ENCODE measurements at regions of chr7 and their contacts with region 1.

Region 1: DNA sequence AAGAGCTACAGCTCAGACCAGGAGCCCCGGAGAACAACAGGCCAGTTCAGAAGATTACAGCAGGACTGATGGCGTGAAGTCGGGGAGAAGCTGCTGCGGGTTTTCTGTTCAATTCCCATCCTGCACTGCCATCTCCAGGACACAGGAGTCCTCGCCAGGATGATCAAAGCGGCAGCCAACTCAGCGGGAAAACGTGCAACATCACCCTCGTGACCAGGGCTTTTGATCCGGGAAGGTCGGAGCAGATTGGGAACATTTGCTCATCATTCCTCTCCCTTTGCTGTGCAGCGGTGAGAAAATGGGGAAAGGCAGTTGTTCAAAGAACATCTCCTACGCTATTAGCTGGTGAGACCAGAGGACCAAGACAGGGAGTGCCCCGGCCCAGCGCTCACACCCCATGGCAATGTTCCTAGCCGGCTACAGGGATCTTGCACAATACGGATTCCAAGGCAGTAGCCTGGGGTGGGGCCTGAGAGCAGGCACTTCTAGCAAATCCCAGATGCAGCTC is 50.4 kb upstream of the FOXK1 start:
- DNase-seq: peak; percentile 85
- ATAC-seq: peak; percentile 80
- H3K4me3 ChIP-seq: peak overlapping the region; percentile 30 to 35
- H3K27ac ChIP-seq: peak overlapping the region; percentile 45
- H3K4me1 ChIP-seq: peaks cover 28 to 41% of the 10 kb centered on the region in 2 experiments
- H3K27me3 ChIP-seq: no peaks in the 10 kb centered on the region
- CTCF ChIP-seq: peak; percentile 70 to 79 (median 73); a peak in 5 of 6 replicates
- POLR2A ChIP-seq: no peak
- RAD21 ChIP-seq: peak; percentile 88

Region 2: GRCh38 chr7:3300651-3301378 is 1330.9 kb before region 1 on chr7 and contains the start of gene SDK1:
- CTCF ChIA-PET with region 1: no interaction called
- POLR2A ChIA-PET with region 1: no interaction called
- RAD21 ChIA-PET with region 1: no interaction called
- intact Hi-C with region 1: loop called (anchors 10 kb)
- DNase-seq: peak; percentile 71
- ATAC-seq: peak; percentile 95
- H3K4me3 ChIP-seq: no peak within 1 kb of the TSS
- H3K27ac ChIP-seq: no peak within 1 kb of the TSS
- H3K4me1 ChIP-seq: peaks cover 0 to 2% of the 10 kb centered on the region in 2 experiments; a peak in 1 of 4 replicates
- H3K27me3 ChIP-seq: peaks cover 37% of the 10 kb centered on the region
- CTCF ChIP-seq: peak; percentile 44 to 74 (median 60); a peak in 5 of 6 replicates
- POLR2A ChIP-seq: no peak
- RAD21 ChIP-seq: peak; percentile 72
- total RNA-seq, gene SDK1: 0.05 TPM

Region 3: DNA sequence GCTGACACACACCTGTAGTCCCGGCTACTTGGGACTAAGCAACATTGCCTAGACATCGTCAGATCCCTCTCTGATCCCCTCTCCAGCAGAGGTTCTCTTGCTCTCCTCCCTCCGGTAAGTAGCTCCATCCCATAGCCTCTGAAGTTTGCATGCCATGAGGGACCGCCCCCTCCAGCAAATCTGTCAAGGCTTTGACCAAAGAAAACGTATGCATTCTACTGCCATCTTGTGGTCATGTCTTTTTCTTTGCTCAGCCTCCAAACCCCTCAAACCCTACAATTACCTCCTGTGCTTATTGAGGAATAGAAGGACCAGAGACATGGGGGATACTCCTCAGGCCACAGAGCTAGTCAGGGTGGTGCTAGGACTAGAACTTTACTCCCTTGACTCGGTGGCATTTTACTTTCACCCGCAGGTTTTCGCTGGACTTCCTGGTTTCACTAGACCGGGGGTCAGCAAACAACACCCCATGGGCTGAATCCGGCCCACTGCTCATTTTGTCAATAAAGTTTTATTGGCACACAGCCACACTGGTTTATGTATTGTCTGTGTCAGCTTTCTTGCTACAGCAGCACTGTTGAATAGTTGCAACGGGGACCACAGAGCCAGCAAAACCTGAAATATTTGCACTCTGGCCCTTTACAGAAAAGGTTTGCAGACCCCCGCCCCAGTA is 152.2 kb before region 1 on chr7:
- CTCF ChIA-PET with region 1: no interaction called
- POLR2A ChIA-PET with region 1: no interaction called
- RAD21 ChIA-PET with region 1: no interaction called
- intact Hi-C with region 1: loop called (anchors 1 kb)
- DNase-seq: peak; percentile 73
- ATAC-seq: peak; percentile 97
- H3K4me3 ChIP-seq: no peak overlapping the region
- H3K27ac ChIP-seq: no peak overlapping the region
- H3K4me1 ChIP-seq: no peaks in the 10 kb centered on the region
- H3K27me3 ChIP-seq: peaks cover 3% of the 10 kb centered on the region; the same call in 1 of the 2 replicates
- CTCF ChIP-seq: peak; percentile 61 to 75 (median 68); a peak in 5 of 6 replicates
- POLR2A ChIP-seq: no peak
- RAD21 ChIP-seq: peak; percentile 70

Region 4: GRCh38 chr7:4610768-4611467 is 20.8 kb before region 1 on chr7:
- CTCF ChIA-PET with region 1: interaction called, 7 read pairs
- POLR2A ChIA-PET with region 1: interaction called, 3 read pairs
- RAD21 ChIA-PET with region 1: interaction called in 1 of 2 experiments, 4 read pairs
- intact Hi-C with region 1: loop called (anchors 2 kb)
- DNase-seq: peak; percentile 73
- ATAC-seq: peak; percentile 98
- H3K4me3 ChIP-seq: no peak overlapping the region
- H3K27ac ChIP-seq: no peak overlapping the region
- H3K4me1 ChIP-seq: peaks cover 0 to 5% of the 10 kb centered on the region in 2 experiments; a peak in 1 of 4 replicates
- H3K27me3 ChIP-seq: no peaks in the 10 kb centered on the region
- CTCF ChIP-seq: peak; percentile 72 to 92 (median 74)
- POLR2A ChIP-seq: no peak
- RAD21 ChIP-seq: peak; percentile 96

Region 5: DNA sequence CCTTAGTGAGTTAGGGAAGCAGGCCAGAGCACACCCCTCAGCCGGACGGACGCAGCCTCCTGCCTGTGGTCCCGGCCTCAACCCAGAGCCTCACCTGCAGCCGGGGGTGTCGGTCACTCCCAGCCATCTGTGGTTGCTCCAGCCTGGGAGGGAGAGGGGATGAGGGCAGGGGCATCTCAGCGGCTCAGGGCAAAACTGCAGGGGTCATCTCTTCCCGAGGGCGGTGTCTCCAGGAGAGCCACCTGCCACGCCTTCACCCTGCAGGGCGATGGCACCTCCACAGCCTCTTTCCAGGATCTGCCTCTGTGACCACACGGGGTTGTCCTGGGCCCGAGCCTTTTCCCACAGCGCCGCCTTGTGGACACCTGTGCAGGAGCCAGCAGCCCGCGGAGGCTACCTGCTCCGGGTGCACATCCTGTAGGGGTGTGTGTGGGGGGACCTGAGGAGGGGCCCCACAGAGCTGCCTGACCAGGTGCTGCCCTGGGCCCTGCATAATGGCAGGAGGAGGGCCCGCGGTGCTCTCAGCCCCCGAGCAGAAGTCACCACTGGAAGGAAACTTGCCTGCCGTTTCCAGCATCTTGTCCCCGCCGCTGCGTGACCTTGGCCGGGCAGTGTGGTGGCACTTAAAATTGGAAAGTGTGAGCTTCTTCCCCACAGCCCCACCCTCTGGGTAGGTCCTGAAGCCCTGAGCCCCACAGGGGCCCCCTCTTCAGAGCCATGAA is 122.2 kb after region 1 on chr7:
- CTCF ChIA-PET with region 1: interaction called, 6 read pairs
- POLR2A ChIA-PET with region 1: no interaction called
- RAD21 ChIA-PET with region 1: interaction called in 1 of 2 experiments, 3 read pairs
- intact Hi-C with region 1: loop called (anchors 5 kb)
- DNase-seq: peak; percentile 51
- ATAC-seq: peak; percentile 100
- H3K4me3 ChIP-seq: no peak overlapping the region
- H3K27ac ChIP-seq: no peak overlapping the region
- H3K4me1 ChIP-seq: peaks cover 0 to 9% of the 10 kb centered on the region in 2 experiments; a peak in 1 of 4 replicates
- H3K27me3 ChIP-seq: no peaks in the 10 kb centered on the region
- CTCF ChIP-seq: peak; percentile 91 to 97 (median 94)
- POLR2A ChIP-seq: no peak
- RAD21 ChIP-seq: peak; percentile 97